B cell (primary cell): ENCODE measurements at regions of chr17 and their contacts with region 1.

Region 1: DNA sequence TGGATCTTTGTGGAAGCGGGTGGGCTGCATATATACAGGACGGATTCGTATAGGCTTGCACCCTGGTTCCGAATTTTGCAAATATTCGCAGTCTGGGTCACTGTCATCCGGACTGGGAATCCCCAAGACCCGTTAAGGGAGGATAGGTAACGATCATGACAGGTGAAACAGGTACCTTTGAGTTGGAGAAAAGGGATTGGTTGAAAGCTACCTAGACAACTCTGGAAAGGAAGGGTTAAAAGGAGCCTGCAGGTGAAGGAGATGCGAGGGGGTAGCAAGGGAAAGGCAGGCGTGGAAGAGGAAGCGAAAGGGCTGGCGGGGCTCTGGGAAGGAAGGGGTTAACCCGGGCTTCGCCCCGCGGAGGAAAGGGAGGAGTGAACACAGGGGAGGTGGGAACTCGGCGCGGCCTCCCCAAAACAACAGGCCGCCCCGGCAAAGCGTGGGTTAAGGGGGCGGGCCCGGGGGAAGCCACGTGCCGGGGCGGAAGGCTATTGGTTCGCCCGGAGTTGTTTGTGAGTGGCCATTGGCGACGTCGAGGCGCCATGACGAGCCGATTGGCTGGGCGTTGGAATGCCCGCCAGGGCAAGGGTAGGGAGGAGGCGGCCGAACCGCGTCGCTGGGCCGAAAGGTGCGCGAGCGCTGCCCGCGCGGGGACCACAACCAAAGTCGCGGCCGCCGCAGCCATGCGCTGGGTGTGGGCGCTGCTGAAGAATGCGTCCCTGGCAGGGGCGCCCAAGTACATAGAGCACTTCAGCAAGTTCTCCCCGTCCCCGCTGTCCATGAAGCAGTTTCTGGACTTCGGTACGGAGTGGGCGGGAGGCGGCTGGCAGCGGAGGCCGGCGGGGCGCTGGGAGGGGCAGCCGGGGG is at the start of gene PDK2:
- DNase-seq: peak; percentile 98
- ATAC-seq: peak; percentile 93
- H3K4me3 ChIP-seq: peak within 1 kb of the TSS; percentile 61 to 95 (median 89)
- H3K4me3 Mint-ChIP-seq: peak within 1 kb of the TSS; percentile 99
- H3K27ac ChIP-seq: peak within 1 kb of the TSS; percentile 3 to 77
- H3K27ac Mint-ChIP-seq: peak within 1 kb of the TSS; percentile 94
- H3K4me1 ChIP-seq: peaks cover 8 to 20% of the 10 kb centered on the region in 2 donors
- H3K4me1 Mint-ChIP-seq: peaks cover 27% of the 10 kb centered on the region
- H3K27me3 ChIP-seq: peaks cover 0 to 3% (median 0%) of the 10 kb centered on the region in 4 experiments
- H3K27me3 Mint-ChIP-seq: no peaks in the 10 kb centered on the region
- CTCF ChIP-seq: no peak
- total RNA-seq, gene PDK2: 35.2 and 36.7 TPM in 2 replicates

Region 2: DNA sequence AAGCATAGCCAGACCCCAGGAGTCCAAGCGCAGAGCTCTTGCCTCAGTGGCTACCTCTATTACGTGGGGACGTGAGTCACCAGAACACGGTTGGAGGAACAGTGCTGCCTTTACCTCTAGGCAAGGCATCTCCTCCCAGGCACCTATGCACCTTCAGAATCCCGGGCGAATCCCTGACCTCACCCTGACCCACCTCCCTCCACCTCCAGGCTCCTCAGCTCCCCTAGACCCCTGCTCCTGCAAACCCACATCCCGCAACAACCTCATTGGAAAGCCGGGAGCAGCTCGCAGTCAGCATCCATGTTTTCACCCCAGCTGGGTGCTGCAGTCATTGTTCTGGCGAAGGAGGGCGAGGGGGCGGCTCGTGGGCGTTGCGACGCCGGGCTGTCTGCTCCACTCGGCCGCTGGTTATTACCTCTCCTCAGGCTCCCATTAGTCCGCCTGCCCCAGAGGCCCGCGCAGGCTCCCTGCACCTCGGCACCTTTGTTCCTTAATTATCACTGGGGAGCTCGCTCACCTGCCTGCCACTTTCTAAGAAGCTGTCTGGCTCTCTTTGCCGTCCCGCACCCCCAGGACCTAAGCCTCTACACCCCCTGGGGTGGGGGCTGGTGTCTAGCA is 150.6 kb before region 1 on chr17:
- CTCF ChIA-PET with region 1: no interaction called
- POLR2A ChIA-PET with region 1: no interaction called
- intact Hi-C with region 1: no loop called
- DNase-seq: no peak
- ATAC-seq: no peak
- H3K4me3 ChIP-seq: no peak overlapping the region
- H3K4me3 Mint-ChIP-seq: no peak overlapping the region
- H3K27ac ChIP-seq: no peak overlapping the region
- H3K27ac Mint-ChIP-seq: no peak overlapping the region
- H3K4me1 ChIP-seq: peaks cover 0 to 1% of the 10 kb centered on the region in 2 donors
- H3K4me1 Mint-ChIP-seq: no peaks in the 10 kb centered on the region
- H3K27me3 ChIP-seq: peaks cover 0 to 31% (median under 1%) of the 10 kb centered on the region in 4 experiments
- H3K27me3 Mint-ChIP-seq: peaks cover 42% of the 10 kb centered on the region
- CTCF ChIP-seq: no peak

Region 3: DNA sequence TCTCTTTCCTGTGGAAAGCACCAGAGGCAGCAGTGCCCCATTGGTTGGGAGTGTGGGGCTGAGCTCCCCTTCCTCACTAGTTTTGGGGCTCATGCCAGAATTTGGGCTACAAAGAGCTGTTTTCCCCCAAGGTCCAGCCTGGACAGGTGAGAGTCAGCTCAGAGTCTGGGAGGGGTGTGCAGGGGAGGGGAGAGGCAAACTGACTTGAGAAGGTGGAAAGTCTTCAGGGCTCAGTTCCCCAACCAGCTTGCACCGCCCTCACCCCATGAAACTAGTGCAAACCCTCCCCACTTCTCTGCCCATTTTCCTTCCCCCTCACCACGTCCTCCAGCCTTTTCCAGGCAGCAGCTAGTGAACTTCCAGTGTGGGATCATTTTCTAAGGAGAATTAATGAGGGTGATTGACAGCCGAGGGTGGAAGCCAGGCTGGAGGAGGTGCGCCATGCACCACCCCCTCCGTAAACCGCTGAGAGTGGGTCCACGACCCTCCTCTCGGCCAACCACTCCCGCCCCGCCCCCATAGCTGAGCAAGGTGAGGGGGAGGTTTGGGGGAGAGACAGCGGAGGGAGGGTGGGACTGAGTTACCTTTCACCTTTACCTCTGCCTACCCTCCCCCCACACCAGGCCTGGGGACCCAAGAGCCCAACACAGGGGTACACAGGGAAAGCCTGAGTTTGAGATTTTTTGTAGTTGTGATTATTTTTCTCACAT is 132.2 kb before region 1 on chr17:
- CTCF ChIA-PET with region 1: no interaction called
- POLR2A ChIA-PET with region 1: no interaction called
- intact Hi-C with region 1: no loop called
- DNase-seq: no peak
- ATAC-seq: no peak
- H3K4me3 ChIP-seq: no peak overlapping the region
- H3K4me3 Mint-ChIP-seq: no peak overlapping the region
- H3K27ac ChIP-seq: no peak overlapping the region
- H3K27ac Mint-ChIP-seq: peak overlapping the region; percentile 53
- H3K4me1 ChIP-seq: peaks cover 26 to 36% of the 10 kb centered on the region in 2 donors
- H3K4me1 Mint-ChIP-seq: peaks cover 22% of the 10 kb centered on the region
- H3K27me3 ChIP-seq: peaks cover 0 to 67% (median 53%) of the 10 kb centered on the region in 4 experiments
- H3K27me3 Mint-ChIP-seq: peaks cover 64% of the 10 kb centered on the region
- CTCF ChIP-seq: no peak

Region 4: DNA sequence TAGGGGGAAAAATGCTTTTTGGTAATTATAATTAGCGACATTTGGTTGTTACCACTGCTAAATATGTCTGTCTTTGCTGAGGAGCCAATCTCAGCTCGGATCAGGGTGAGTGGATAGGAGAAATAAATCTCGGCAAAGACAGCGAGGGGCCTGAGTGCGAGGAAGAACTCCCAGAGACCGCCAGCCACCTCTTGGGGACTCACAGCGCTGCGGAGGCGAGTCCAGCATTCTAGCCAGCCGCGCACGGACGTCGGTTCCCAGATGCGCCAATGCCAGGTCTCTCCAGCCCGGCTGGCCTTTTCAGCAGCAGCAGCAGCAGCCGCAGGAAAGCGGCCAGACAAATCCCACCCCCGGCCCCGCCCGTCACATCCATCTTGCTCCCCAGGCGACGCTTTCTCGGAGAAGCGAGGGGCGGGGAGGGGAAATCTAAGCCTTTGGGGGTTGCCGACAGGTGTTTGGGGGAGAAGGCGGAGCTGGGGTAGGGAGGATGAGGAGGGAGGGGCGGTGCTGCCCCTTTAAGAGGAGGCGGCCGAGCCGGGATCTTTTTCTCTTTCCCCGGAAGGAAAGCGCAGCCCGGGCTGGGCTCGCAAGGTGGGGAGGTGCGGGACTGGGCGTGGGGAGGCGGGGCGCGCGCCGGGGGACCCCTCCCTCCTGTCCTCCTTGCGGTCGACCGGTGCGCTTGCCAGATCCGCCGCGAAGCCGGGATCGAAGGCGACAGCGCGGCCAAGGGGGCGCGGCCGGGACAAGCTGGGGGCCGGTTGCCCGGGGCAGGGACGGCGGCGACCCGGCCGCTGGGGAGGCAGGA is 39.4 kb before region 1 on chr17 and contains the start of gene ITGA3:
- CTCF ChIA-PET with region 1: interaction called, 13 read pairs
- POLR2A ChIA-PET with region 1: no interaction called
- intact Hi-C with region 1: no loop called
- DNase-seq: peak; percentile 62
- ATAC-seq: peak; percentile 56
- H3K4me3 ChIP-seq: peak within 1 kb of the TSS; percentile 40 to 80 (median 64)
- H3K4me3 Mint-ChIP-seq: peak within 1 kb of the TSS; percentile 92
- H3K27ac ChIP-seq: no peak within 1 kb of the TSS
- H3K27ac Mint-ChIP-seq: peak within 1 kb of the TSS; percentile 75
- H3K4me1 ChIP-seq: peaks cover 11 to 20% of the 10 kb centered on the region in 2 donors
- H3K4me1 Mint-ChIP-seq: peaks cover 22% of the 10 kb centered on the region
- H3K27me3 ChIP-seq: peaks cover 0 to 42% (median 3%) of the 10 kb centered on the region in 4 experiments
- H3K27me3 Mint-ChIP-seq: peaks cover 17% of the 10 kb centered on the region
- CTCF ChIP-seq: no peak
- total RNA-seq, gene ITGA3: 11.9 and 13.0 TPM in 2 replicates

Region 5: GRCh38 chr17:50114849-50115357 is 19.9 kb after region 1 on chr17:
- CTCF ChIA-PET with region 1: interaction called, 28 read pairs
- POLR2A ChIA-PET with region 1: no interaction called
- intact Hi-C with region 1: loop called (anchors 2 kb)
- DNase-seq: peak; percentile 66
- ATAC-seq: peak; percentile 20
- H3K4me3 ChIP-seq: no peak overlapping the region
- H3K4me3 Mint-ChIP-seq: peak overlapping the region; percentile 48
- H3K27ac ChIP-seq: no peak overlapping the region
- H3K27ac Mint-ChIP-seq: no peak overlapping the region
- H3K4me1 ChIP-seq: peaks cover 10 to 20% of the 10 kb centered on the region in 2 donors
- H3K4me1 Mint-ChIP-seq: peaks cover 14% of the 10 kb centered on the region
- H3K27me3 ChIP-seq: peaks cover 0 to 46% (median 16%) of the 10 kb centered on the region in 4 experiments
- H3K27me3 Mint-ChIP-seq: peaks cover 45% of the 10 kb centered on the region
- CTCF ChIP-seq: peak; percentile 72

Region 6: DNA sequence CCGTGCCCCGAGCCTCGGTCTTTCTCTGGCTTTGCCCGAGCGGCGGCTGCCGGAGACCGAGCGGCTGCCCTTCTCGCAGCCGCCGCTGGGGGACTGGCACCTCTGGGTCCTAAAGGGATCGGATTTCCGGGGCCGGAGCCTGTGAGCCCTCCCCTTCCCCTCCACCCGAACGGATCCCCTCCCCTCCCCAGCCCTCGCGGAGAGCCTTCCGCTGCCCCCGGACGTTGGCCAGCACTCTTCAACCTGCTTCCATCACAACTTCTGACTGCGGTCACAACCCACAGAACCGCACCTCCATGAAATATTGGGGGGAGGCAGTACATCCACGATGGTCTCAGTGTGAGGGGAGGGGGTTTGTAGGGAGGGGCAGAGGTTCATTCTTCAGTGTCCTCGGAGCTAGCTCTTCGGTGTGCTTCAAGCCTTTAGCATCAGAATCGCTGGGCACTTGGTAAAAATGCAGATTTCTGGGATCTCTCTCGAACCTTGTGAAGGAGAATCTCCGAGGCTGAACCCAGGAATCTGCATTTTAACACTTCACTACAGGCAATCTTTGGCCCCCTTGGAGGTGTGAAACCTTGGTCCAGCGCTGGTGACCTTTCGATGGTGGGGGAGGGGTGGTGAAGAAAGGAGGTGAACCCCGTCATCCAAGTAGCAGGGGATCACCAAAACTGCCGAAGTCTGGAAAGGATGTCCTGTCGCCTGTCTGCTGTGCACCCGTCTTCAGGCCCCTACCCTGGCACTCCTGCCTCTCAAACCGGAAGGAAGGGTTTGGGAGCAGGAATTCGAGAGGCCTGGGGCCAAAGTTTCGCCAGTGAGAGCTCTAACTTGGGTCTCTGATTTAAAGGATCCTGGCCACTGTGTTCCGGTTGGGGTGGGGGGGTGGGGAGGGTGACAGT is 56.3 kb after region 1 on chr17:
- CTCF ChIA-PET with region 1: interaction called, 31 read pairs
- POLR2A ChIA-PET with region 1: interaction called, 6 read pairs
- intact Hi-C with region 1: loop called (anchors 1 kb)
- DNase-seq: peak; percentile 90
- ATAC-seq: peak; percentile 48
- H3K4me3 ChIP-seq: peak overlapping the region; percentile 70 to 97 (median 85)
- H3K4me3 Mint-ChIP-seq: peak overlapping the region; percentile 95
- H3K27ac ChIP-seq: peak overlapping the region; percentile 48 to 75
- H3K27ac Mint-ChIP-seq: peak overlapping the region; percentile 94
- H3K4me1 ChIP-seq: peaks cover 17 to 46% of the 10 kb centered on the region in 2 donors
- H3K4me1 Mint-ChIP-seq: peaks cover 37% of the 10 kb centered on the region
- H3K27me3 ChIP-seq: no peaks in the 10 kb centered on the region
- H3K27me3 Mint-ChIP-seq: no peaks in the 10 kb centered on the region
- CTCF ChIP-seq: peak; percentile 60

Region 7: DNA sequence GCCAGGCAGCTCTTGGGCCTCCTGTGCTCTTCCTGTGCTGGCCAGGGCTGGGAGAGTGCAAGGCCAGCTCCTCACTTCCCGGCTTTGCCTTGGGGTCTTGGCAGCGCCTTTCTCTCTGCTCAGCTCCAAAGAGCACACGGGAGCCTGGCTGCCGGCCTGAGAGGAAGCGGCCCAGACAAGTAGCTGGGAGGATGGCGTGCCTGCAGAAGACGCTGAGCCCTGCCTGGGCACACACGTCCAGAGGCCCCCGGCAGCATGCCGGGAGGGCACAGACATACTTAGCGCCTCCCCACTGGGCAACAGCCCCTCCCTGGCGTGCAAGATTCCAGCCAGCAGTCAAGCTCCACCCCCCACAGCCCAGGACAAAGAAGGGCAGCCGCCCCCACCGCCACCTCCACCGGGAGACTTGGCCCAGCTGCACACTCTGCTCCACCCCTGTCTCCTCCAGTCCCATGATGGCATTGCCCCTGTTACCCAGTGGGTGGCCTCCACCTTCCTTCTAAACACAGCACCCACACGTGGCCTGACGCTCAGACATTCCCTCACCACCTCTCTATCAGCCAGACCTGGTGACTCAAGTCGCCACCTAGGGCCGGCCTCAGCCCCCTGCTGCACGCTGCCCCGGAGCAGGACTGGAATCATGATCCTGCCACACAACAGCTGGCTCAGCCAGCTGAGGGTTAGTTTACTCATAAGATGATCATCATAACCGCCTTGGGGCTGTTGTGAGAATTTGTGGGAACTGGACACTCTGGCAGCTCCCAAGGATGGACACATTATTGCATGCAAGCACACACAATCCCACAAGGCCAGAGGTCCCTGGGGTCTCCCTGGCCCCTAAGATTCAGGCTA is 83.2 kb after region 1 on chr17:
- CTCF ChIA-PET with region 1: interaction called, 23 read pairs
- POLR2A ChIA-PET with region 1: no interaction called
- intact Hi-C with region 1: no loop called
- DNase-seq: peak; percentile 75
- ATAC-seq: peak; percentile 98
- H3K4me3 ChIP-seq: peak overlapping the region in 2 of 5 experiments; percentile 25 to 29
- H3K4me3 Mint-ChIP-seq: peak overlapping the region; percentile 59
- H3K27ac ChIP-seq: no peak overlapping the region
- H3K27ac Mint-ChIP-seq: no peak overlapping the region
- H3K4me1 ChIP-seq: peaks cover 7 to 14% of the 10 kb centered on the region in 2 donors
- H3K4me1 Mint-ChIP-seq: peaks cover 21% of the 10 kb centered on the region
- H3K27me3 ChIP-seq: no peaks in the 10 kb centered on the region
- H3K27me3 Mint-ChIP-seq: no peaks in the 10 kb centered on the region
- CTCF ChIP-seq: peak; percentile 60

Region 8: GRCh38 chr17:50269477-50270434 is 174.8 kb after region 1 on chr17:
- CTCF ChIA-PET with region 1: interaction called, 10 read pairs
- POLR2A ChIA-PET with region 1: no interaction called
- intact Hi-C with region 1: loop called (anchors 1 kb)
- DNase-seq: peak; percentile 60
- ATAC-seq: peak; percentile 56
- H3K4me3 ChIP-seq: no peak overlapping the region
- H3K4me3 Mint-ChIP-seq: no peak overlapping the region
- H3K27ac ChIP-seq: no peak overlapping the region
- H3K27ac Mint-ChIP-seq: no peak overlapping the region
- H3K4me1 ChIP-seq: peaks cover 7 to 8% of the 10 kb centered on the region in 2 donors
- H3K4me1 Mint-ChIP-seq: peaks cover 7% of the 10 kb centered on the region
- H3K27me3 ChIP-seq: peaks cover 0 to 28% (median 9%) of the 10 kb centered on the region in 4 experiments
- H3K27me3 Mint-ChIP-seq: peaks cover 27% of the 10 kb centered on the region
- CTCF ChIP-seq: peak; percentile 76

Region 9: GRCh38 chr17:50372758-50373556 is 278.0 kb after region 1 on chr17 and contains the starts of genes EME1 and MRPL27:
- CTCF ChIA-PET with region 1: no interaction called
- POLR2A ChIA-PET with region 1: no interaction called
- intact Hi-C with region 1: loop called (anchors 10 kb)
- DNase-seq: peak; percentile 96
- ATAC-seq: peak; percentile 88
- H3K4me3 ChIP-seq: peak within 1 kb of the TSS; percentile 65 to 85 (median 81)
- H3K4me3 Mint-ChIP-seq: peak within 1 kb of the TSS; percentile 100
- H3K27ac ChIP-seq: peak within 1 kb of the TSS; percentile 91 to 96
- H3K27ac Mint-ChIP-seq: peak within 1 kb of the TSS; percentile 100
- H3K4me1 ChIP-seq: peaks cover 14 to 19% of the 10 kb centered on the region in 2 donors
- H3K4me1 Mint-ChIP-seq: peaks cover 23% of the 10 kb centered on the region
- H3K27me3 ChIP-seq: no peaks in the 10 kb centered on the region
- H3K27me3 Mint-ChIP-seq: no peaks in the 10 kb centered on the region
- CTCF ChIP-seq: no peak
- total RNA-seq, gene EME1: 2.3 and 3.4 TPM in 2 replicates
- total RNA-seq, gene MRPL27: 33.5 and 40.2 TPM in 2 replicates